A549 (cell line): ENCODE measurements at regions of chr19 and their contacts with region 1.

Region 1: GRCh38 chr19:51473009-51473707 is 5.2 kb upstream of the CEACAM18 start:
- DNase-seq: peak; percentile 48 to 72
- ATAC-seq: peak; percentile 77 to 90; a peak in 5 of 6 replicates
- H3K4me3 ChIP-seq: no peak overlapping the region
- H3K27ac ChIP-seq: no peak overlapping the region
- H3K4me1 ChIP-seq: peaks cover 13% of the 10 kb centered on the region; the same call in 2 of the 3 replicates
- CTCF ChIP-seq: peak; percentile 77
- EP300 ChIP-seq: no peak
- POLR2A ChIP-seq: no peak
- RAD21 ChIP-seq: peak; percentile 56 to 79; a peak in 4 of 5 replicates

Region 2: DNA sequence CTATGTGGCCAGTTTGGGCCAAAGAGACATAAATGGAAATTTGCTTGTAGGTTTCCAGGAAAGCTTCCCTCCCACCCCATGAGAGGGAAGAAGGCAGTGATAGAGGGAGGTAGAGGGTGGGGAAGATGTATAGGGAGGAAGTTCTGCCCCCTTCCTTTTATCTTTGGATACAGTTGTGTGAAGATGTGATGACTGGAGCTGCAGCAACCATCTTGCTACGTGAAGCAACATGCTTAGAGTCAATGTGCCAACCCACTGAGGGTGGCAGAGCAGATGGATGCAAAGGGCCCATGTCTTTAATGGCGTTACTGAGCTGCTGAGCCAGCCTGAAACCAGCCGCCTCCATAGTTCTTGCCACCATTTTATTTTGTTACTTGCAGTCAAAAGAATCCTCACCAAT is 142.0 kb before region 1 on chr19:
- CTCF ChIA-PET with region 1: no interaction called
- POLR2A ChIA-PET with region 1: no interaction called
- DNase-seq: no peak
- ATAC-seq: no peak
- H3K4me3 ChIP-seq: no peak overlapping the region
- H3K27ac ChIP-seq: no peak overlapping the region
- H3K4me1 ChIP-seq: peaks cover 14% of the 10 kb centered on the region; the same call in 2 of the 3 replicates
- CTCF ChIP-seq: no peak
- EP300 ChIP-seq: no peak
- POLR2A ChIP-seq: no peak
- RAD21 ChIP-seq: no peak

Region 3: DNA sequence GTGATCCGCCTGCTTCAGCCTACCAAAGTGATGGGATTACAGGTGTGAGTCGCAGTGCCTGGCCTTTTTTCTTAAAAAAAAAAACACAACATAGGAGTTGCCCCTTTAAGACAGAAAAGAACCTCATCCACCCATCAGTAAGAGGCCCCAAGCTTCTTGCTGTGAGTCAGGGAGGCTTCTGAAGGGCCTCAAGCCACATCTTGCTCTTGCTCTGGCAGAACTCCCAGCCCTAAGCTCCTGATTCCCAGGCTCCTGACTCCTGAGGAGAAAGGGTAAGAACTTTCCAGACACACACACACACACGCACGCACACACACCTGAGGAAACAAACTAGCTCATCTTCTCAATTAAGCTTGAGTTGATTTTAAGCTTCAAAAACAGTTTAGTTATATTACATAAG is 113.9 kb before region 1 on chr19:
- CTCF ChIA-PET with region 1: no interaction called
- POLR2A ChIA-PET with region 1: no interaction called
- DNase-seq: peak in 1 of 2 experiments; percentile 76
- ATAC-seq: peak; percentile 28 to 40; a peak in 4 of 6 replicates
- H3K4me3 ChIP-seq: no peak overlapping the region
- H3K27ac ChIP-seq: peak overlapping the region; percentile 79 to 96
- H3K4me1 ChIP-seq: peaks cover 67% of the 10 kb centered on the region
- CTCF ChIP-seq: no peak
- EP300 ChIP-seq: no peak
- POLR2A ChIP-seq: no peak
- RAD21 ChIP-seq: no peak

Region 4: DNA sequence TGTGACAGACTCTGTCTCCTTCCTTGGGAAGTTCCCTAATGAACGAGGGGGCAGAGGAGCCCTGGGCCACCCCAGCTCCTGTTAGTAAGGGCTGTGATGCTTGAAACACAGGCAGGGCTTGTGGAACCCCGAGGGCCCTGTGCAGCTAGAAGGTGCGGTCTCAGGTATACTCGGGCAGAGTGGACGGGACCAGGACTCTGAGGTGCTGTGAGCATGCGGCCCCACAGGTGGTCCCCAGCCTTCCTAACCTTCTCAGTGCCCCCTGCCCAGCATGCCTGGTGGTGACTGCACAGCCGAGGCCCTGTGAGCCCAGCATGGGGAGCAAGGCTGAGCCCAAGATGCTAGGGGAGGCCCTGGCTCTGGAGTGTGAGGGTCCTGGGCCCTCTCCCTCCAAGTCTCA is 10.9 kb before region 1 on chr19:
- CTCF ChIA-PET with region 1: interaction called, 17 read pairs
- POLR2A ChIA-PET with region 1: no interaction called
- DNase-seq: no peak
- ATAC-seq: no peak
- H3K4me3 ChIP-seq: no peak overlapping the region
- H3K27ac ChIP-seq: no peak overlapping the region
- H3K4me1 ChIP-seq: no peaks in the 10 kb centered on the region
- CTCF ChIP-seq: no peak
- EP300 ChIP-seq: no peak
- POLR2A ChIP-seq: no peak
- RAD21 ChIP-seq: no peak